ENCODE measurements at regions of chr2 and their contacts with region 1.

Region 1: GRCh38 chr2:65256054-65256453 is 28.4 kb downstream of the ACTR2 start:
- DNase-seq: peak; percentile 15 to 27 (median 26)
- H3K4me3 ChIP-seq: no peak overlapping the region
- H3K27ac ChIP-seq: no peak overlapping the region
- H3K4me1 ChIP-seq: no peaks in the 10 kb centered on the region
- H3K27me3 ChIP-seq: no peaks in the 10 kb centered on the region

Region 2: GRCh38 chr2:65220432-65221131 is 35.5 kb before region 1 on chr2:
- CTCF ChIA-PET with region 1: no interaction called
- POLR2A ChIA-PET with region 1: no interaction called
- DNase-seq: no peak
- H3K4me3 ChIP-seq: no peak overlapping the region
- H3K27ac ChIP-seq: no peak overlapping the region
- H3K4me1 ChIP-seq: peaks cover 0 to 9% (median 5%) of the 10 kb centered on the region in 4 experiments
- H3K27me3 ChIP-seq: no peaks in the 10 kb centered on the region

Region 3: DNA sequence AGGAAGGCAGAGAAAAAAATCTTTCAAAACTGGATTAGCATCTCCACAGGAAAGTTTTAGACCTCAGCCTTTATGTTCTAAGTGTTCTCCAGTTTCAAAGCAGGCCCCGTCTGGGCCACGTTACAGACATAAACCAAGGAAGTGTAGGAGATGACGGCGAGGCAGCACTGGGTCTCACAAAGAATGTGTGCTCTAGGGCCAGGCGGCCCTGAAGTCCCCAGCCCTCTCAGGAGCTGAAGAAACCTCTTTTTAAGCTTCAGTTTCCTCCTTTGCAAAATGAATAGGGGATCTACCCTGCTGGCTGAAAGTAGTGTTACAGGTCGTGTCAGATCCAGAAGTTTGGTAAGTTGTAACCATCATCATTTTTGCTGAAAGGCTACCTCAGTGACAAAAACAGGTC is 94.6 kb after region 1 on chr2:
- CTCF ChIA-PET with region 1: no interaction called
- POLR2A ChIA-PET with region 1: no interaction called
- DNase-seq: peak; percentile 28 to 54 (median 51)
- H3K4me3 ChIP-seq: no peak overlapping the region
- H3K27ac ChIP-seq: no peak overlapping the region
- H3K4me1 ChIP-seq: peaks cover 8 to 39% (median 30%) of the 10 kb centered on the region in 4 experiments
- H3K27me3 ChIP-seq: no peaks in the 10 kb centered on the region

Region 4: GRCh38 chr2:65554765-65555591 is 298.9 kb after region 1 on chr2:
- CTCF ChIA-PET with region 1: interaction called, 10 read pairs
- POLR2A ChIA-PET with region 1: no interaction called
- DNase-seq: peak in 1 of 3 donors; percentile 24
- H3K4me3 ChIP-seq: no peak overlapping the region
- H3K27ac ChIP-seq: no peak overlapping the region
- H3K4me1 ChIP-seq: no peaks in the 10 kb centered on the region
- H3K27me3 ChIP-seq: no peaks in the 10 kb centered on the region

Region 5: GRCh38 chr2:65818873-65819451 is 562.9 kb after region 1 on chr2:
- CTCF ChIA-PET with region 1: no interaction called
- POLR2A ChIA-PET with region 1: no interaction called
- DNase-seq: peak in 1 of 3 donors; percentile 0
- H3K4me3 ChIP-seq: no peak overlapping the region
- H3K27ac ChIP-seq: peak overlapping the region in 1 of 2 experiments; percentile 15
- H3K4me1 ChIP-seq: no peaks in the 10 kb centered on the region
- H3K27me3 ChIP-seq: peaks cover 0 to 2% (median 0%) of the 10 kb centered on the region in 5 experiments